ENCODE measurements at regions of chr5 and their contacts with region 1.

Region 1: GRCh38 chr5:159548517-159548916 is 218.2 kb upstream of the IL12B start:
- DNase-seq: no peak
- H3K4me3 ChIP-seq: no peak overlapping the region
- H3K27ac ChIP-seq: no peak overlapping the region
- H3K4me1 ChIP-seq: peaks cover 14% of the 10 kb centered on the region
- H3K27me3 ChIP-seq: no peaks in the 10 kb centered on the region
- CTCF ChIP-seq: no peak

Region 2: DNA sequence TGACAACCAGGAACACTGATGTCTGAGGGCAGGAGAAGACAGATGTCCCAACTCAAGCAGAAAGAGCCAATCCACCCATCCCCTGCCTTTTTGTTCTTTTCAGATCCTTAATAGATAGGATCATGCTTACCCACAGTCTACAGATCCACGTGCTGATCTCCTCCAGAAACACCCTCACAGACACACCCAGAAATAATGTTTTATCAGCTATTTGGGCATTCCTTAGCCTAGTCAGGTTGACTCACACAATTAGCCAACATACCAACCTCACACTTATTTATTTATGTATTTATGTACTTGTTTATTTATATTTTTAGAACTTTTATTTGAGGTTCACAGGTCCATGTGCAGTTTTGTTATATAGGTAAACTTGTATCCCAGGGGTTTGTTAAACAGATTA is 66.8 kb before region 1 on chr5:
- CTCF ChIA-PET with region 1: no interaction called
- dilution Hi-C with region 1: loop called (anchors 5 kb)
- in situ Hi-C with region 1: no loop called
- intact Hi-C with region 1: no loop called
- DNase-seq: no peak
- H3K4me3 ChIP-seq: no peak overlapping the region
- H3K27ac ChIP-seq: no peak overlapping the region
- H3K4me1 ChIP-seq: no peaks in the 10 kb centered on the region
- H3K27me3 ChIP-seq: no peaks in the 10 kb centered on the region
- CTCF ChIP-seq: no peak

Region 3: GRCh38 chr5:159497221-159497620 is 51.3 kb before region 1 on chr5:
- CTCF ChIA-PET with region 1: no interaction called
- dilution Hi-C with region 1: no loop called
- in situ Hi-C with region 1: no loop called
- intact Hi-C with region 1: no loop called
- DNase-seq: no peak
- H3K4me3 ChIP-seq: no peak overlapping the region
- H3K27ac ChIP-seq: no peak overlapping the region
- H3K4me1 ChIP-seq: no peaks in the 10 kb centered on the region
- H3K27me3 ChIP-seq: no peaks in the 10 kb centered on the region
- CTCF ChIP-seq: no peak

Region 4: GRCh38 chr5:159712672-159713071 is 164.2 kb after region 1 on chr5:
- CTCF ChIA-PET with region 1: no interaction called
- dilution Hi-C with region 1: no loop called
- in situ Hi-C with region 1: no loop called
- intact Hi-C with region 1: no loop called
- DNase-seq: no peak
- H3K4me3 ChIP-seq: no peak overlapping the region
- H3K27ac ChIP-seq: no peak overlapping the region
- H3K4me1 ChIP-seq: no peaks in the 10 kb centered on the region
- H3K27me3 ChIP-seq: no peaks in the 10 kb centered on the region
- CTCF ChIP-seq: no peak

Measured in mammary epithelial cell (primary cell).